Panc1 (cell line): ENCODE measurements at regions of chr1 and their contacts with region 1.

Region 1: DNA sequence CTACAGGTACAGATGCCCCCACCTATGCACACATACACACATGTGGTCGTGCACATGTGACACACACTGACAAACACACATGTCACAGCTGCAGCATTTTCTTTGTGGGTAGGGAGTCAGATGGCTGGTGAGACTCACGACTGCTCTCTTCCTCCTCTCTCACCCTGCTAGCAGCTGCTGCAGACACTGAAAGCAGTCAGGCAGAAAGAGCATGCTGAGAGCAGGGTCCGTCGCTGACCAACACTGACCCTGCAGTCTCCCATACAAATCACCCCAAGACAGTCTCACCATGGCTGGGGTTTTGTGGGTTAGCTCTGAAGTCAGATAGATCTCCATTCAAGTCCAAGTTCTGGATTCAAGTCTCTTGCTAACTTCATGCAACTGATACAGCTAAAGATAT is 188.3 kb downstream of the ASTN1 start:
- DNase-seq: no peak
- ATAC-seq: no peak
- H3K4me3 ChIP-seq: no peak overlapping the region
- H3K27ac ChIP-seq: no peak overlapping the region
- H3K4me1 ChIP-seq: no peaks in the 10 kb centered on the region
- H3K27me3 ChIP-seq: no peaks in the 10 kb centered on the region; the same call in 1 of the 2 replicates
- CTCF ChIP-seq: no peak

Region 2: GRCh38 chr1:175580841-175581240 is 1395.4 kb before region 1 on chr1:
- CTCF ChIA-PET with region 1: no interaction called
- POLR2A ChIA-PET with region 1: interaction called, 30 read pairs
- in situ Hi-C with region 1: no loop called
- intact Hi-C with region 1: no loop called
- DNase-seq: no peak
- ATAC-seq: no peak
- H3K4me3 ChIP-seq: no peak overlapping the region
- H3K27ac ChIP-seq: no peak overlapping the region
- H3K4me1 ChIP-seq: no peaks in the 10 kb centered on the region
- H3K27me3 ChIP-seq: no peaks in the 10 kb centered on the region
- CTCF ChIP-seq: no peak